ENCODE measurements at regions of chr6 and their contacts with region 1.

Region 1: DNA sequence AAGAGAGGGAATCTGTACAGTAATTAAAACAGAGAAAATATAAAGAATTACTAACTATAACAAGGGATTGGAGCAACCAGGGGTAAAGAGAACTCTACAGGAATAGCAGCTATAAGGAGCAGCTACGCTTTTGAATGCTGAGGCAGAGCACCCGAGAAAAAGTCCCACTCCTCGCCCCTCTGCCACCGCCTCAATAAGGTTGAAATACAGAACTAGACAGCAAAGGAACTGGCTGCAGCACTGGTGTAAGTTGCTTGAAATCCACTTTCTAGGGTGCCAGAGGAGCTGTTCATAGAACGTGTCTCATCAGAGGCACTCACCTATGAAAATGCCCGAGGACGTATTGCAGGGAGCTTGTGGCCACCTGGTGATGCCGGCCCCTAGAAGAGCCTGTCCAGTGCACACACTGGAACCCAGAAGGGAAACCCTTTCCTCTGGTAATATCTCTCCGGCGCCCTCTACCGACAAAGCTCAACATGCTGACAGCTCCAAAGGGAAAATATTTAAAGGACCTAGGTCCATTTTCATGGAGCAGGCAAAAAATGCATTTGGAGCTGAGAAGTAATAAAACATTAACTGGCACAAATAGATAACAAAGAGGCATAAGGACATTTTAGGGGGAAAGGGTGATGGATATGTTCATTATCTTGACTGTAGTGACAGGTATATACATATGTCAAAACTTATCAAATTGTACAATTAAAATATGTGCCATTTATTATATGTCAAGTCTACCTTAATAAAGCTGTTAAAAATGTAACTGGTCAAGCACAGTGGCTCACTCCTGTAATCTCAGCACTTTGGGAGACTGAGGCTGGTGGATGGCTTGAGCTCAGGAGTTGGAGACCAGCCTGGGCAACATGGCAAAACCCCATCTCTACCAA is 137.4 kb upstream of the HDAC2 start:
- DNase-seq: peak; percentile 34
- H3K4me3 ChIP-seq: no peak overlapping the region
- H3K27ac ChIP-seq: no peak overlapping the region
- H3K27me3 ChIP-seq: no peaks in the 10 kb centered on the region
- CTCF ChIP-seq: peak; percentile 88

Region 2: GRCh38 chr6:113980937-113981554 is 127.3 kb before region 1 on chr6:
- CTCF ChIA-PET with region 1: interaction called, 62 read pairs
- POLR2A ChIA-PET with region 1: no interaction called
- DNase-seq: no peak
- H3K4me3 ChIP-seq: no peak overlapping the region
- H3K27ac ChIP-seq: no peak overlapping the region
- H3K27me3 ChIP-seq: no peaks in the 10 kb centered on the region
- CTCF ChIP-seq: peak; percentile 64

Region 3: GRCh38 chr6:114024746-114025145 is 83.6 kb before region 1 on chr6:
- CTCF ChIA-PET with region 1: interaction called, 10 read pairs
- POLR2A ChIA-PET with region 1: no interaction called
- DNase-seq: no peak
- H3K4me3 ChIP-seq: no peak overlapping the region
- H3K27ac ChIP-seq: no peak overlapping the region
- H3K27me3 ChIP-seq: no peaks in the 10 kb centered on the region
- CTCF ChIP-seq: no peak

Region 4: DNA sequence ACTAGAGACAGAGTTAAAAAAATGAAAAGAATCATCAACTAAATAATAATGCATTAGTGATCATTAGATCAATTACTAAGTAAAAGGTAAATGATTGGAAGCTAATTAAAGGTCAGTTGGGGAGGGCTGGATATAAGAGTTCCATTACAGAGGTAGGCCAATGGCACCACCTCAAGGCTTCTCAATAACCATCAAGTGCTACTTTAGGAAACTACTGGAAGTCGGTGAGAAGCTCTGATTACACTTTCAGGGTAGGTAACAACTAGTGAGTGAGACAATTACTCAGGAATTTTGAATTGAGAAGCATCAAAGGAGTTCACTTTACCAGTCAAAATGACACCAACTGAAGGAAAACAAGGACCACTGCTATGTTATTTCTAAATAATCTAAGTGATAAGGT is 47.2 kb before region 1 on chr6:
- CTCF ChIA-PET with region 1: interaction called, 15 read pairs
- POLR2A ChIA-PET with region 1: no interaction called
- DNase-seq: no peak
- H3K4me3 ChIP-seq: no peak overlapping the region
- H3K27ac ChIP-seq: no peak overlapping the region
- H3K27me3 ChIP-seq: peaks cover 4% of the 10 kb centered on the region
- CTCF ChIP-seq: no peak

Region 5: GRCh38 chr6:114121913-114122645 is 13.7 kb after region 1 on chr6:
- CTCF ChIA-PET with region 1: interaction called, 29 read pairs
- POLR2A ChIA-PET with region 1: no interaction called
- DNase-seq: no peak
- H3K4me3 ChIP-seq: no peak overlapping the region
- H3K27ac ChIP-seq: no peak overlapping the region
- H3K27me3 ChIP-seq: no peaks in the 10 kb centered on the region
- CTCF ChIP-seq: no peak